ENCODE measurements at regions of chr12 and their contacts with region 1.

Region 1: GRCh38 chr12:116916714-116917114 is 6.0 kb downstream of the FBXW8 start:
- DNase-seq: peak; percentile 62 to 95
- H3K4me3 ChIP-seq: peak overlapping the region; percentile 36; the same call in 1 of the 2 replicates
- H3K27ac ChIP-seq: peak overlapping the region; percentile 97
- H3K4me1 ChIP-seq: peaks cover 53% of the 10 kb centered on the region
- H3K27me3 ChIP-seq: no peaks in the 10 kb centered on the region
- CTCF ChIP-seq: peak; percentile 55

Region 2: DNA sequence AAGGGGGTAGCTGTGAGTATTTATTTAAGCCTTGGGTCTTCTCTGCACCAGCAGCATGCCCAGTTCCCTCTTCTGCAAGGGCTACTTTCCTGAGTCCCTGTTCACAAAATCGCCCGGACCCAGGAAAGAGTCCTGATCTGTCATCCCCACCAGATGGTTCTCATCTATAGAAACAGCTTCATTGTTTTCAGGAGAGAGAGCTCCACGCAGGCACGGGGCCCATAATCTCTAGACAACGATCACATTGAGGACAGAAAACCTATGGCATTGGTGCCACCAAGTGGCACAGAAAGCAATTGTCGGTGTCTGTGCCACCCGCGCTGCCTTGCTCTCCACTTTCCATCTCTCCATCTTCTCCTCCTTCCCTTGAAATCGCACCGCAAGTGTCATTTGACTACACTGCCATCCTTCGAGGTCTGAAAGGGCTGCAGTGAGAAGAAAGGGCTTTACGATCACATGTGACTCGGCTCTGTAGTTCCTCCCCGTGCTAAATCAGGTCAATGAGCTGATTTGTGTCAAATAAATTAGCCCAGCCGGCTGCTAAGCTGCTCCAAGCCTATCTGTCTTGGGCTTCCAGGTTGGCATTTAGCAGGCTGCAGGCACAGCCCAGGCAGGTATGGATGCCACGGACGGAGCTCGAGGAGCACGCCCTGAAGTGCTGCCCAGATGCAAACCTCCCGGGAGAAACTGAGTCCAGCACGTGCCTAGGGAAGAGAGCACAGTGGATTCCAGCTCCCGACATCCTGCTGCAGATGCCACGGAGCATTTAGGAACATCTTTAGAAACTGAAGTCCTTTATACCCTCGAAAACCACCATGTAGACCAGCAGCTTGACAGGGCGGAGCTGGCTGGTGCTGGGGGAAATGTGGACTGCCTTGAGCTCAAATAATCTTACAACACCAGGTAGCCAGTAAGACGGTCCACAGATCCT is 207.6 kb before region 1 on chr12:
- CTCF ChIA-PET with region 1: no interaction called
- POLR2A ChIA-PET with region 1: no interaction called
- intact Hi-C with region 1: loop called (anchors 2 kb)
- DNase-seq: peak; percentile 54 to 60
- H3K4me3 ChIP-seq: peak overlapping the region; percentile 30; the same call in 1 of the 2 replicates
- H3K27ac ChIP-seq: no peak overlapping the region
- H3K4me1 ChIP-seq: no peaks in the 10 kb centered on the region
- H3K27me3 ChIP-seq: no peaks in the 10 kb centered on the region
- CTCF ChIP-seq: peak; percentile 78

Region 3: GRCh38 chr12:116737774-116738700 is 178.7 kb before region 1 on chr12 and contains the starts of genes RNFT2 and SPRING1:
- CTCF ChIA-PET with region 1: no interaction called
- POLR2A ChIA-PET with region 1: no interaction called
- intact Hi-C with region 1: loop called (anchors 1 kb)
- DNase-seq: peak; percentile 96 to 99
- H3K4me3 ChIP-seq: peak within 1 kb of the TSS; percentile 89
- H3K27ac ChIP-seq: no peak within 1 kb of the TSS
- H3K4me1 ChIP-seq: peaks cover 14% of the 10 kb centered on the region
- H3K27me3 ChIP-seq: no peaks in the 10 kb centered on the region
- CTCF ChIP-seq: peak; percentile 19; the same call in 1 of the 2 replicates
- total RNA-seq, gene RNFT2: 18.6 and 21.1 TPM in 2 replicates
- total RNA-seq, gene SPRING1: 29.3 and 32.5 TPM in 2 replicates

Region 4: GRCh38 chr12:116813278-116814041 is 103.3 kb before region 1 on chr12:
- CTCF ChIA-PET with region 1: no interaction called
- POLR2A ChIA-PET with region 1: no interaction called
- intact Hi-C with region 1: loop called (anchors 1 kb)
- DNase-seq: peak; percentile 89 to 99
- H3K4me3 ChIP-seq: no peak overlapping the region
- H3K27ac ChIP-seq: peak overlapping the region; percentile 63
- H3K4me1 ChIP-seq: peaks cover 32% of the 10 kb centered on the region
- H3K27me3 ChIP-seq: no peaks in the 10 kb centered on the region
- CTCF ChIP-seq: no peak; the same call in 1 of the 2 replicates

Region 5: GRCh38 chr12:116861320-116861719 is 55.4 kb before region 1 on chr12:
- CTCF ChIA-PET with region 1: interaction called, 12 read pairs
- POLR2A ChIA-PET with region 1: no interaction called
- intact Hi-C with region 1: no loop called
- DNase-seq: no peak
- H3K4me3 ChIP-seq: no peak overlapping the region
- H3K27ac ChIP-seq: no peak overlapping the region
- H3K4me1 ChIP-seq: peaks cover 27% of the 10 kb centered on the region
- H3K27me3 ChIP-seq: no peaks in the 10 kb centered on the region
- CTCF ChIP-seq: no peak

Region 6: GRCh38 chr12:116880817-116881324 is 35.8 kb before region 1 on chr12:
- CTCF ChIA-PET with region 1: no interaction called
- POLR2A ChIA-PET with region 1: no interaction called
- intact Hi-C with region 1: loop called (anchors 2 kb)
- DNase-seq: peak; percentile 47 to 66
- H3K4me3 ChIP-seq: peak overlapping the region; percentile 67
- H3K27ac ChIP-seq: peak overlapping the region; percentile 45
- H3K4me1 ChIP-seq: peaks cover 18% of the 10 kb centered on the region
- H3K27me3 ChIP-seq: peaks cover 3% of the 10 kb centered on the region; the same call in 1 of the 2 replicates
- CTCF ChIP-seq: no peak

Measured in PC-9 (cell line).